Activated CD4-positive, alpha-beta memory T cell treated with anti-CD3 and anti-CD28 coated beads, Interleukin-2, amount 10 ng/mL, durations not matched to agents 7 days and 5 days (primary cell): ENCODE measurements at regions of chr5 and their contacts with region 1.

Region 1: DNA sequence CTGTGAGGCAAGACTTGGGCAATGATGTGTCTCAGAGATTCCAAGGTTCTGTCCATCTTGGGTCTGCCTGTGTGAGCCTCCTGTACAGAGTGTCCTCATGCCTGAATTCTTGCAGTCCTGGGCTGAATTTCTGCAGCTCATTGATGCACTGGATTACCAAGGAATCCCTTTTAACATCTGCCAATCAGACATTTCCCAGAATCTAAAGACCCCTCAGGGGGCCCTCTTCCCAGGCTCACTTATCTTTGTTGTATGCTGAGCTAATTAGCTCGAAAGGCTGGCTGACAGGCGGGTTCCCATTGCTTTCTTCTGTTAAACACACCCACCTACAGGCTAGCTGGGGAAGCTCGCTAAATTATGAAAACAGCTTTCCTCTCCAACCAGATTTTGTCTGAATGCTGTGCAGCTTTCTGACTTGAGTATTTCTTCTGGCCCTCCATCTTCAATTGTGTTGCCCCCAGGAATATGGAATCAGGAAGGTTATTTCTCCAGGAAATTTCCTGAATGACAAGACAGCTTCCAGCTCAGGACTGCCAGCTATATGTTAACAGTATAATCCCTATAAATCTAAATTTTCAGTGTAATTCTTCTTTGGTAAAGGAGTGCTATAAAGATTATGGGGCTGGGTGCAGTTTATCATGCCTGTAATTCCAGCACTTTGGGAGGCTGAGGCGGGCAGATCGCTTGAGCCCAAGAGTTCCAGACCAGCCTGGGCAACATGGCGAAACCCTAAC is at the start of gene LIX1:
- DNase-seq: peak; percentile 37
- H3K4me3 Mint-ChIP-seq: no peak within 1 kb of the TSS
- H3K27ac Mint-ChIP-seq: no peak within 1 kb of the TSS
- H3K4me1 Mint-ChIP-seq: no peaks in the 10 kb centered on the region
- H3K27me3 Mint-ChIP-seq: peaks cover 19% of the 10 kb centered on the region
- total RNA-seq, gene LIX1: not detected

Region 2: DNA sequence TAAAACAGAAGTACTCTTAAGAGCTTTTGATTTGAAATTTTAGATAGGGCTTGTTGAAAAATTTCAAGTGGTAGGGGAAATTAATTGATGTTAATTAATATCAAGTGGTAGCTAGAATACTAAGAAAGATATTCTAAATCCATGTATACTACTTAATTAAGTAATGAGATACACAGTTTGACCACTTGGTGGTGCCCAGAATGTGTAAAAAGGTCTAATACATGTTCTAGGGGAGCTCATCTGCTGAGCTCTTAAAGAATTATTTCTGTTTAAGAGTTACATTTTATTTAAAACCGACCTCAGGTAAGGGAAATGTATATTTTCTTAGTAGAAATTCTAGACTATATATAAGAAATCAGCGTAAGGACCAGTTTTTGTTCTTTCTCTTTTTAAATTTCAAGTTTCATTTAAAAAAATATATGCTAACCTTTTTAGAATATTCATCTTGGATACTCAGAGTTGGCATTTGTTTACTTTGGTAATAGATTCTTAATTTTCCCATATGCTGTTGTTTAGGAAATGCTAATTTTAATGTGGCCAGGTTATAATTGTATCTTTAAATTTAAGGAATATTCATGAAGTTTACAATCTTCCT is 145.3 kb before region 1 on chr5:
- CTCF ChIA-PET with region 1: interaction called, 22 read pairs
- POLR2A ChIA-PET with region 1: no interaction called
- DNase-seq: no peak
- H3K4me3 Mint-ChIP-seq: no peak overlapping the region
- H3K27ac Mint-ChIP-seq: no peak overlapping the region
- H3K4me1 Mint-ChIP-seq: peaks cover 21% of the 10 kb centered on the region
- H3K27me3 Mint-ChIP-seq: no peaks in the 10 kb centered on the region

Region 3: GRCh38 chr5:97243353-97243752 is 100.7 kb after region 1 on chr5:
- CTCF ChIA-PET with region 1: no interaction called
- POLR2A ChIA-PET with region 1: no interaction called
- DNase-seq: no peak
- H3K4me3 Mint-ChIP-seq: no peak overlapping the region
- H3K27ac Mint-ChIP-seq: no peak overlapping the region
- H3K4me1 Mint-ChIP-seq: no peaks in the 10 kb centered on the region
- H3K27me3 Mint-ChIP-seq: no peaks in the 10 kb centered on the region